ENCODE measurements at regions of chr3 and their contacts with region 1.

Region 1: DNA sequence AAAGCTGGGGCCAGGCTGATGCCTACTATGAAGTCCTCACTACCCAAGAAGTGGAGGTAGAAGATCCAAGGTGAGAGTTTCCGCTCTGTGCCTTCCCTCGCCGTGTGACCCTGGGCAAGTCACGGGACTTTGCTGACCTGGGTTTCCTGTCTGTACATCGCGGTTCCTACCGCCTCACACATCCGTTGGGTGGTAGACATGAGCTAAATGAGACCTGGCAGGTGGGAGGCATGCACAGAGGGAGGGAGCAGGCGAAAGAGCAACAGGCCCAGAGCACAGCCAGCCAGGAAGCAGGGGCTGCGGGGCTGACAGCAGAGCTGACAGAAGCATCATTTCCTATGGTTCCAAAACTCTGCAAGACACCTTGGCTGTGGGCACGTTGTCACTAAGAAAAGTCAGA is 157.3 kb upstream of the BHLHE40 start:
- DNase-seq: peak; percentile 45 to 92 (median 83)
- ATAC-seq: peak; percentile 92 to 96 (median 94)
- H3K4me3 ChIP-seq: no peak overlapping the region
- H3K4me3 Mint-ChIP-seq: peak overlapping the region; percentile 1 to 65 (median 3)
- H3K27ac ChIP-seq: peak overlapping the region; percentile 72
- H3K27ac Mint-ChIP-seq: peak overlapping the region; percentile 92 to 98
- H3K4me1 ChIP-seq: peaks cover 48 to 56% of the 10 kb centered on the region in 2 experiments
- H3K4me1 Mint-ChIP-seq: peaks cover 69 to 73% (median 71%) of the 10 kb centered on the region in 3 donors
- H3K27me3 ChIP-seq: no peaks in the 10 kb centered on the region
- H3K27me3 Mint-ChIP-seq: no peaks in the 10 kb centered on the region

Region 2: DNA sequence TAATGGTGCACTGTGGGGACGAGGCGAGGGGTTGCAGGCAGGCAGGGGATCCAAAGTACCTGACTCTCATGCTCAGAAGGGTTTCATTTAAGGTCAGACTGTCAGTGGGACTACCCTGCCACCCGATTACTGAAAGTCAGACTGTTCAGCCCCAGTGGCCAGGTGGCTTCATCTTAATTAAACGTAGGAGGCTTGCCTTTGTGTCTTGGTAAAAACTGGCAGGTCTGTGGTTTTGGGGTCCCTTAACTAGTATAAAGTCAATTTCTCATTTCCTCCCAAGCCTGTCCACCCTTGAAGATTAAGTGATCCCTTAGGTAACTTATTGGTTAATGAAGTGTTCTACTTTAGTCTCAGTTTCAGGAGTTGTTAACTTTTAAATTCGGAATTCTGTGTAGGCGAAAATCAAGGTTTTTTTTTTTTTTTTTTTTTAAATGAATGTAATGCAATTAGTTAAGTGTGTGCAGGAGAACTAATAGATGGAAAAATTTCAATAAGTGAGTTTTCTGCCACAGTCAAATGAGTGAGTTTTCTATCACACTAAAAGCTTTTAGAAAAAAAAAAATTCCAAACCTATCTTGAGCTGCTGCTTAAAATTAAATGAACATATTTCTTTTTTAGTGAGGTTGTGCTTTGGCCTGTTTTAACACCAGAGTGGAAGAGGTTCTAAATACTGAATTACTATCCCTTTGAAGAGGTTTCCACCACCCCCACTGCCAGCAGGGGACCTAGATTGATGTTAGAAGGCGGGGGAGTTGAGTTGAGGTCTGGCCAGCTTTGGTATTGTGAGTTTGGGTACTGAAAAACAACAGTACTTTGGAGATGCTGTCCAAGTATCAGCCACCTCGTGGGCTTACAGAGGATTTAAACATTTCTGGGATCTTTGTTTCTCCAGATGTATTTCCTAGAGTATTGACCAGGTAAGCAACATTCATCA is 313.7 kb before region 1 on chr3:
- CTCF ChIA-PET with region 1: no interaction called
- POLR2A ChIA-PET with region 1: no interaction called
- DNase-seq: no peak
- ATAC-seq: no peak
- H3K4me3 ChIP-seq: no peak overlapping the region
- H3K4me3 Mint-ChIP-seq: no peak overlapping the region
- H3K27ac ChIP-seq: no peak overlapping the region
- H3K27ac Mint-ChIP-seq: no peak overlapping the region
- H3K4me1 ChIP-seq: peaks cover 9 to 29% of the 10 kb centered on the region in 2 experiments
- H3K4me1 Mint-ChIP-seq: peaks cover 47 to 71% (median 60%) of the 10 kb centered on the region in 3 donors
- H3K27me3 ChIP-seq: no peaks in the 10 kb centered on the region
- H3K27me3 Mint-ChIP-seq: no peaks in the 10 kb centered on the region

Region 3: DNA sequence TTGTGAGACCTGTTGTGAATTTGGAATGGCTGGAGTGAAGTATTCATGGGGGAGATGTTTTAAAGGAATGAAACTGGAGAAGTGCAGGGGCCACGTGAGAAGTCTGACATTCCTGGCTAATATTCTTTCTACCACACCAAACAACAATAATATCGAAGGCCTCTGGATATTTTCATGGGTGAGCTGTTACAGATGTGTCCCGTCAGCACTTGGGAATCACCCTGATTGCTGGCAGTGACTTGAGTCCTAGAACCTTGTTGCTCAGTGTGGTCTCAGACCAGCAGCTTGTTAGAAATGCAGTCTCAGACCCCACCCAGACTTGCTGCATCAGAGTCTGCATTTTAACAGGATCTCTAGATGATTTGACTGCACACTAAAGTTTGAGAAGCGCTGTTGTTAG is 215.1 kb before region 1 on chr3:
- CTCF ChIA-PET with region 1: no interaction called
- POLR2A ChIA-PET with region 1: no interaction called
- DNase-seq: no peak
- ATAC-seq: no peak
- H3K4me3 ChIP-seq: no peak overlapping the region
- H3K4me3 Mint-ChIP-seq: no peak overlapping the region
- H3K27ac ChIP-seq: no peak overlapping the region
- H3K27ac Mint-ChIP-seq: no peak overlapping the region
- H3K4me1 ChIP-seq: no peaks in the 10 kb centered on the region
- H3K4me1 Mint-ChIP-seq: peaks cover 13 to 32% (median 17%) of the 10 kb centered on the region in 3 donors
- H3K27me3 ChIP-seq: no peaks in the 10 kb centered on the region
- H3K27me3 Mint-ChIP-seq: no peaks in the 10 kb centered on the region

Region 4: DNA sequence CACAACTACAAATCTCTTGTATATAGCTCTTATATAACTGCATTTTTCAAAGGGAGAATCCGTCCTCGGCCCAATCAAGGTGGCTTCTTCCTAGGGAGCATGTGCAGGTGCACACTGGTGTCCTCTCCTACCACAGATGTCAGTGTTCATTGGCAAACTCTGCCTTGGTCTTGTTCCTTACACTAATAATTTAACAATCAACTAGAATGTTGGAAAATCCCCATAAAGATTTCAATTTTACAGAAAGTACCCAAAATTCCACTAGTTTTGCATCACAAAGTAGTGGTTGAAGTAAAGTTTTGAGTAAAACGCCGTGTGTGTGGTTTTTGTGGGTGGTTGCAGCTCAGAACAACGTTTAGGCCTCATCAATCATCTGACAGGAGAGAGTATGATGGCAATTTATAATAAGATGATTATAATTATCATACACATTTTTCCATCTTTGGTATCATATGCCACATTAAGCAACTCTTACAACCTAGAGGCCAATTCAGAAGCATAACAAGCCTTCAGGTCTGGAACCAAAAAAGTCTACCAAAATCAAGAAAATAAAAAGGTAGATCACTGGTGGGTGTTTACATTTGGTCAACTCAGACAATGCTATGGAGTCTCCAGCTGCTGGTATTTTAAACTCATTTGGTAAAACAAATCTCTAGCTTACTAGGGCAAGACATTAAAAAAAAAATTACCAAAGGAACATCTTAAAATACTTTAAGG is 28.4 kb after region 1 on chr3:
- CTCF ChIA-PET with region 1: interaction called in 1 of 2 experiments, 13 read pairs
- POLR2A ChIA-PET with region 1: interaction called, 3 to 4 read pairs
- DNase-seq: peak in 19 of 35 experiments; percentile 8 to 78 (median 33)
- ATAC-seq: peak in 3 of 4 experiments; percentile 10 to 46 (median 20)
- H3K4me3 ChIP-seq: no peak overlapping the region
- H3K4me3 Mint-ChIP-seq: peak overlapping the region; percentile 11 to 63 (median 26)
- H3K27ac ChIP-seq: peak overlapping the region; percentile 94
- H3K27ac Mint-ChIP-seq: peak overlapping the region; percentile 93 to 96
- H3K4me1 ChIP-seq: peaks cover 18 to 45% of the 10 kb centered on the region in 2 experiments
- H3K4me1 Mint-ChIP-seq: peaks cover 85 to 90% (median 87%) of the 10 kb centered on the region in 3 donors
- H3K27me3 ChIP-seq: no peaks in the 10 kb centered on the region
- H3K27me3 Mint-ChIP-seq: no peaks in the 10 kb centered on the region

Region 5: GRCh38 chr3:4866841-4867240 is 44.9 kb after region 1 on chr3:
- CTCF ChIA-PET with region 1: interaction called in 1 of 2 experiments, 3 read pairs
- POLR2A ChIA-PET with region 1: interaction called, 3 to 11 read pairs
- DNase-seq: peak in 5 of 35 experiments; percentile 7 to 47 (median 15)
- ATAC-seq: no peak
- H3K4me3 ChIP-seq: no peak overlapping the region
- H3K4me3 Mint-ChIP-seq: peak overlapping the region; percentile 74 to 84 (median 82)
- H3K27ac ChIP-seq: peak overlapping the region; percentile 90
- H3K27ac Mint-ChIP-seq: peak overlapping the region; percentile 94 to 95
- H3K4me1 ChIP-seq: peaks cover 18 to 20% of the 10 kb centered on the region in 2 experiments
- H3K4me1 Mint-ChIP-seq: peaks cover 34 to 47% (median 34%) of the 10 kb centered on the region in 3 donors
- H3K27me3 ChIP-seq: no peaks in the 10 kb centered on the region
- H3K27me3 Mint-ChIP-seq: no peaks in the 10 kb centered on the region

Region 6: GRCh38 chr3:4983739-4984510 is 161.9 kb after region 1 on chr3:
- CTCF ChIA-PET with region 1: interaction called, 5 to 16 read pairs
- POLR2A ChIA-PET with region 1: interaction called in 1 of 2 experiments, 22 read pairs
- DNase-seq: peak in 34 of 35 experiments; percentile 36 to 87 (median 64)
- ATAC-seq: peak; percentile 46 to 58 (median 56)
- H3K4me3 ChIP-seq: peak overlapping the region in 1 of 2 donors; percentile 29
- H3K4me3 Mint-ChIP-seq: peak overlapping the region; percentile 50 to 95 (median 77)
- H3K27ac ChIP-seq: peak overlapping the region; percentile 82
- H3K27ac Mint-ChIP-seq: peak overlapping the region; percentile 84 to 95
- H3K4me1 ChIP-seq: peaks cover 22 to 64% of the 10 kb centered on the region in 2 experiments
- H3K4me1 Mint-ChIP-seq: peaks cover 62 to 75% (median 65%) of the 10 kb centered on the region in 3 donors
- H3K27me3 ChIP-seq: no peaks in the 10 kb centered on the region
- H3K27me3 Mint-ChIP-seq: no peaks in the 10 kb centered on the region

Measured in T-cell (primary cell).